HepG2 (cell line): ENCODE measurements at regions of chr3 and their contacts with region 1.

Region 1: DNA sequence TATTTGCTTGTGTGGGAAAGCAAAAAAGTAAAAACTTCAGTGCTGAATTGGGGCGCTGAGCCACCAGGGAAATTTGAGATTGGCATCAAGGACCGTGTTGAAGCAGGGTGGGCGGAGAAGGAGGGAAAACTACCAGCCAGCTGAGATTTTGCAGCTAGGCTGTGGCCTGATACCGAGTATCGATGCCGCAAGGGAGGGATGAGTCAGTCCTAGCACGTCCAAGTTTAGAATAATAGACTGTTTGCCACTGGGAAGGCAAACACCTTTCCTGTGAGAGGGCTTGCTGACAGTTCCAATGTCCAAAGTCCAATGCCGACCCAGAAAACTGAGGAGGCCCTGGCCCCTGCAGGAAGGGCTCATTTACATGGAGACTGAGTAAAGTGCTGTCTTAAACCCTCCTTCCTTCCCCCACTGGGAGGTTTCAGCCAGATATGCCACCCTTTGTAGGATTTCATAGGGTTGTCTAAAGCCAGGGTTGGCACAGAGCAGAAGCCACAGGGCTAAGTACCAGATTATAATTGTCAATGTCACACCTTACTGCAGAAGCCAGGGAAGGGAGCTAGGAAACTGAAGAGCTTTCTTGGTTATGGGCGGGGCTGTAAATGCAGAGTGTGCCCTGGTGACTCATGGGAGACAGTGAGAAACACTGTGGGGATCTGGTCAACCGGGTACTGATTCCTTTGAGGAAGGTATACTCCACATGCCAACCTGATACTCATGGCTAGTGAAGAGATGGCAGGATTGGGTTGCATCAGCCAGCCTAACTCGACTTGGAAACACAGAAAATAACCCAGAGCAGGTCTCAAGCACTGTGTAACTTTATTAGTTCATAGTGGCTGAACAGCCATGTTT is 28.4 kb upstream of the PIK3CB start:
- DNase-seq: peak; percentile 97
- ATAC-seq: peak; percentile 95
- H3K4me3 ChIP-seq: peak overlapping the region; percentile 6 to 45 (median 11); a peak in 3 of 6 replicates
- H3K27ac ChIP-seq: peak overlapping the region; percentile 93
- H3K4me1 ChIP-seq: peaks cover 72% of the 10 kb centered on the region
- H3K27me3 ChIP-seq: no peaks in the 10 kb centered on the region
- CTCF ChIP-seq: peak; percentile 58
- EP300 ChIP-seq: peak; percentile 39 to 90; a peak in 3 of 4 replicates
- POLR2A ChIP-seq: peak; percentile 65 to 70
- RAD21 ChIP-seq: peak; percentile 41; the same call in 1 of the 2 replicates

Region 2: DNA sequence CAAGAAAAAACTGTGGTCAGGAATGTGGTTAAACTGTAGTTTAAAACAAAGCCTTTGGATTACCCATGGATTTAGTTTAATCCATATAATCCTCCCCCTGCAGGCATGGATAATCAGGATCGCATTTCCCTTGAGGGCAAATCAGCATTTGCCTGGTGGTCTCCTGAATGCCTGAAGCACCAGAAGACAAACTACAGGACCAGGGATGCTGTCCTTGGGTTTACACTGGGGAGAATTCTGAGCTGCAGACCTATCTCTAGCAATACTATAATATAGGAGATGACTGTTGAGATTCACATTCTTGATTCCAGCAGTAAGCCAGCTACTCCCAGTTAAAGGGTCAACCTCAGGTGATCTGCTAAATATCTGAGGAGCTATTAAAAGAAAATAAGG is 39.0 kb before region 1 on chr3:
- CTCF ChIA-PET with region 1: no interaction called
- POLR2A ChIA-PET with region 1: interaction called, 36 read pairs
- in situ Hi-C with region 1: no loop called
- intact Hi-C with region 1: no loop called
- DNase-seq: no peak
- ATAC-seq: peak; percentile 69
- H3K4me3 ChIP-seq: no peak overlapping the region
- H3K27ac ChIP-seq: peak overlapping the region; percentile 67
- H3K4me1 ChIP-seq: peaks cover 50% of the 10 kb centered on the region
- H3K27me3 ChIP-seq: no peaks in the 10 kb centered on the region; a peak in 1 of 5 replicates
- CTCF ChIP-seq: no peak
- EP300 ChIP-seq: no peak
- POLR2A ChIP-seq: no peak
- RAD21 ChIP-seq: no peak

Region 3: DNA sequence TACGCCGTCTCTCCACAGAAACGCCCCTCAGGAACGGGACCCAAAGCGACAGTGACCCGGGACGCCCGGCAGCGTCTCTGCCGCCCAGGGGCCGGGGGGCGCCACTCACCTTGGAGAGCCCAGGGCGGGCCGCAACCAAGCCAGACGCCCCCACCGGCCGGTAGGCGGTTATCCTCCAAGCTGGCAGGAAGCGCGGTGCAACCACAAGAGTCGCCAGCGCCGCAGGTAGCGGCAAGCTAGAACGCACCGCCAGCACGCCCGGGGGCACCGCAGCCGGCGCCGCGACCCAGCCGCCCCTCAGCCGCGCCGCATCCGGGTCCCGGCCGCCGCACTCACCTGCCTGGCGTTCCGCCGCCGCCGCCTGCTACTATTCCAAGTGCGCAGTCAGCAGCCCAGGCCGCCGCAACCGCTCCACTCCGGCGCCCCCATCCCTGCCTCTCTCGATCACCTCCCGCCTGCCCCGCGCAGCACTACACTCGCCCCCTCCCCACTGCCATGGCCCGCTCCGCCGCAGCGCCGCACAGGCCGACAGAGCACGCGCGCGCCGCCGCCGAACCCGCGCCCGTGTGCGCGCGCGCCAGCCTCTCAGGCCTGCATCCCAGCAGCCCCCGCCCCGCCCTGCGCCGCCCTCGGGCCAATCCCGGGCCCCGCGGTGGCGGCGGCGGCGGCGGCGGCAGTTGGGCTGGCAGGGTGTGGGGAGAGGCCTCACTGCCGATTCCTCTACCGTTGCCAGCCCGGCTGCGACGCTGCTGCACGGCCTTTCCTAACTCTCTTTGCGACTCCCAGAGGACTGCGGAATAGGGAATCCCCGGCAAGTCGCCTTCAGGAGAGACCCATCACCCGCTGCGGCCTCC is 28.6 kb before region 1 on chr3 and contains the start of gene PIK3CB:
- CTCF ChIA-PET with region 1: interaction called, 3 read pairs
- POLR2A ChIA-PET with region 1: interaction called, 49 read pairs
- in situ Hi-C with region 1: no loop called
- intact Hi-C with region 1: loop called (anchors 1 kb)
- DNase-seq: peak; percentile 72
- ATAC-seq: peak; percentile 95
- H3K4me3 ChIP-seq: peak within 1 kb of the TSS; percentile 80 to 94 (median 86)
- H3K27ac ChIP-seq: peak within 1 kb of the TSS; percentile 95
- H3K4me1 ChIP-seq: peaks cover 39% of the 10 kb centered on the region
- H3K27me3 ChIP-seq: no peaks in the 10 kb centered on the region; a peak in 1 of 5 replicates
- CTCF ChIP-seq: peak; percentile 72
- EP300 ChIP-seq: no peak
- POLR2A ChIP-seq: peak; percentile 91 to 92
- RAD21 ChIP-seq: peak; percentile 84
- total RNA-seq, gene PIK3CB: 6.6 and 18.6 TPM in 2 replicates

Region 4: DNA sequence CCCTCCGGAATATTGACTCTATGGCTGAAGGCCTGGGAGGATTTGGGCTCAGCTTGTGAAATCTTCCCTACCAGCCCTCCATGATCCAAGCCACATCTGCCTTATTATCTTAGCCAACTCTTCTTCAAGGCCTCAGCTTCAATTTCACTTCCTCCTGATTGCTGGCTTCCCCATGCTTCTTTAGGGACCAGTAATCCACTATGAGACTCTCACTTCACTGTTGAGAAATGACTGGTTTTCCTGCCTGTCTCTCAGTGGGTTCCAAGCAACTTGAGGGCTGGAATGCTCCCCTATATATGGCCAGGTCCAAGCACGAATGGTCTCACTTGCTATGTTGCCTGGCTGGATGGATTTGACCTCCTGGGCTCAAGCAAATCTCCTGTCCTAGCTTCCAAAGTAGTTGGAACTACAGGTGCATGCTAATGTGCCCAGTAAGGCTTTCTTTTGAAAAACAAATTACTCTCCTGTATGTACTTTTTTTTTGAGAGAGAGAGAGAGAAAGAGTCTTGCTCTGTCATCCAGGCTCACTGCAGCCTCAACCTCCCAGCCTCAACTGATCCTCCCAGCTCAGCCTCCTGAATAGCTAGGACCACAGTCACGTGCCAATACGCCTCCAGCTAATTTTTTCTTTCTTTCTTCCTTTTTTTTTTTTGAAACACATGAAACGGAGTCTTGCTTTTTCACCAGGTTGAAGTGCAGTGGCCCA is 20.5 kb before region 1 on chr3:
- CTCF ChIA-PET with region 1: no interaction called
- POLR2A ChIA-PET with region 1: interaction called, 82 read pairs
- in situ Hi-C with region 1: no loop called
- intact Hi-C with region 1: no loop called
- DNase-seq: no peak
- ATAC-seq: no peak; the same call in 2 of the 3 replicates
- H3K4me3 ChIP-seq: no peak overlapping the region
- H3K27ac ChIP-seq: no peak overlapping the region
- H3K4me1 ChIP-seq: peaks cover 52% of the 10 kb centered on the region
- H3K27me3 ChIP-seq: no peaks in the 10 kb centered on the region
- CTCF ChIP-seq: no peak
- EP300 ChIP-seq: no peak
- POLR2A ChIP-seq: no peak
- RAD21 ChIP-seq: no peak

Region 5: DNA sequence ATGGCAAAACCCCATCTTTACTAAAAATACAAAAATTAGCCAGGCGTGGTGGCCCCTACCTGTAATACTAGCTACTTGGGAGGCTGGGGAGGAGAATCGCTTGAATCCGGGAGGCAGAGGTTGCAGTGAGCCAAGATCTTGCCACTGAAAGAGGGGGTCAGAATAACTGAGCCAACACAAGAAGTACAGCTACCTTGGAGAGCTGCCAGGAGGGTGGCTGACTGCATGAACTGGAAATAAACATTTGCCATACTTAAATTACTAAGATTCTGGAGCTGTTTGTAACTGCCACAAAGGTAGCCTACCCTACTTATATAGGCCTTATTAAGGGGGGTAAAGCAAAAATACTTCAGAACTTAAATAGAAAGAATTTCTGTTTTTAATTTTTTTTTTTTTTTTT is 13.0 kb before region 1 on chr3:
- CTCF ChIA-PET with region 1: no interaction called
- POLR2A ChIA-PET with region 1: interaction called, 82 read pairs
- in situ Hi-C with region 1: no loop called
- intact Hi-C with region 1: loop called (anchors 1 kb)
- DNase-seq: no peak
- ATAC-seq: no peak
- H3K4me3 ChIP-seq: no peak overlapping the region
- H3K27ac ChIP-seq: peak overlapping the region; percentile 78
- H3K4me1 ChIP-seq: peaks cover 65% of the 10 kb centered on the region
- H3K27me3 ChIP-seq: no peaks in the 10 kb centered on the region
- CTCF ChIP-seq: no peak
- EP300 ChIP-seq: no peak
- POLR2A ChIP-seq: no peak
- RAD21 ChIP-seq: no peak

Region 6: DNA sequence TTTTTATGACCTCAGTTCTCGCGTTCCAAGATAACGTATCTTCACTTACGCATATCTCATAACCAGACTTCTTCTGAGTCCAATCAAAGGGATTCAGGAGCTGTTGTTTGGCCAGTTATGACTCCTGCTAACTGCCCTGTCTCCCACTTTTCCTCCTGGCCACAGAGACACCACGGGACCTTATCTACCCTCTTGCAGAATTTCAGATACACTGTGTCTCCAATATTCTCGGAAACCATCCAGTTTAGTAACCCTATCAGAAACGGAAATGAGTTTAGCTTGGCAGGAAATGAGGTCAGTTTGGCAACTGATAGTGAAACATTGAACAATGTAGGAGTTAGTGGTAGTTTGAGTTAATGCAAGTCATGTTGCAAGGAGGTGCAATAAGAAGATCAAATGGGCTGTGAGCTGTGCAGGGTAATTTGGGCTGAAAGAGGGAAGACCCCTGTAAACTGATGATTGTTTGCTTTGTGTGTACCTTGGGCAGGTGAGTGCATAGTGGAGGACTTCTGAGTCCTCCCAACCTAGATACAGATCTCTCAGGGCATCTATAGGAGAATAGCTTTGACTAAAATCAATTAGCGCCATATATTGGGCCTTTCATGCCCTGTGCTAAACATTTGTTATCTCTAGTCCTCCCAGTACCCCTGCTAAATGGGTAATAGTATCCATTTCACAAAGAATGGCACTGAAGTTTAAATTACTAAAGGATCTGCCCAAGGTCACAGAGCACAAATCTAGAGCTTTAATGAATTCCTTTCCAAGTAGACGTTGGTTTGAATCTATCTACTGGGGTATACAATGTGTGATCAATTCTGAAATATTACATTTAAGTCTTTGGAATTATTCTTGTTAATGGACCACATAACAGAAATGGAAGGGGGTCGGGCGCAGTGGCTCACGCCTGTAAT is 12.9 kb after region 1 on chr3:
- CTCF ChIA-PET with region 1: no interaction called
- POLR2A ChIA-PET with region 1: interaction called, 42 read pairs
- in situ Hi-C with region 1: no loop called
- intact Hi-C with region 1: no loop called
- DNase-seq: no peak
- ATAC-seq: no peak
- H3K4me3 ChIP-seq: no peak overlapping the region
- H3K27ac ChIP-seq: no peak overlapping the region
- H3K4me1 ChIP-seq: peaks cover 37% of the 10 kb centered on the region
- H3K27me3 ChIP-seq: no peaks in the 10 kb centered on the region
- CTCF ChIP-seq: no peak
- EP300 ChIP-seq: no peak
- POLR2A ChIP-seq: no peak
- RAD21 ChIP-seq: no peak